ENCODE measurements at regions of chr9 and their contacts with region 1.

Region 1: DNA sequence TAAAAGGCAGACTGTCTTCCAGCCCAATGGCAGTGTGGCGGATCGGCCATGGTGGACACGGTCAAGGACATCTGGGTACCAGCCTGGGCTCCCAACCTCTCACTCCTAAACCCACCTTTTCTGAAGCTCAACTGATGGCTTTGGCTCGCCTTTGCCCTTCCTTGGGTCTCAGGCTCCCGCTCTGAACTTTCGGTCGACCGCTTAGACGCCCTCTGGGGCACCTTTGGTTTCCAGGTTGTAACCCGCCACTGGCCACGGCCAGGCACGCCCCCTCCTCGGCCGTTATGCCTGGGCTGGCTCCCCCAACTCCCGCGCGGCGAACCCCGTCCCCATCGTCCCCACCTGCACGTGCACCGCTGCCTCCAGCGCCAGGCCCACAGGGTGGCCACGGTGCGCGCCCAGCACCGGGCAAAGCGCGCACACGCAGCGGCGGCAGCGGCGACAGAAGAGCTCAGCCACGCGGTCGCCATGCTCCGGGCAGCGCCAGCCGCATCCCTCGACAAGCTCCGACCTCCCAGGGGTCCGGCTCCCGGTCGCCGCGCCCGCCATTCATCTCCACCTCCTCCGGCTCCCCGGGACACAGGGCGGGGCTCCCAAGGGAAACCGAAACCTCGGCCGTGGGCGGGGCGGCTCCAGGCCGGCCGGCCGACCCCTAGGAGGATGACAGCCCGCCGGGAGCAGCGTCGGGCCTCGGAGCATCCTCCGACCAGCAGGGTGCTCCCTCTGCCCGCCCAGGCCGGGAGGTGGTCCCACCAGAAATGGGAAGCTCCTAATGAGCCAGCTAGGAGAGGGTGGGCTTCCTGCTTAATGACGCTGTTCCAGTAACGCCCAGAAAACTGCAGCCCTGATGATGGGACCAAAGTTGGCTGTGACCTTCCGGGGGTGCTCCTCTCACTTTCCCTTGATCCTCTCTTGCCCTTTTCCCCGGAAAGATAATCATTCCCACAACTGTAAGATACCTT is at the start of gene TRIM14:
- DNase-seq: peak; percentile 35 to 71 (median 45)
- H3K4me3 ChIP-seq: peak within 1 kb of the TSS; percentile 70 to 87
- H3K4me3 Mint-ChIP-seq: peak within 1 kb of the TSS; percentile 87 to 96 (median 92)
- H3K27ac ChIP-seq: peak within 1 kb of the TSS; percentile 92
- H3K27ac Mint-ChIP-seq: peak within 1 kb of the TSS; percentile 89 to 99 (median 95)
- H3K4me1 ChIP-seq: peaks cover 70% of the 10 kb centered on the region
- H3K4me1 Mint-ChIP-seq: peaks cover 37 to 65% (median 50%) of the 10 kb centered on the region in 4 donors
- H3K27me3 ChIP-seq: no peaks in the 10 kb centered on the region
- H3K27me3 Mint-ChIP-seq: no peaks in the 10 kb centered on the region
- total RNA-seq, gene TRIM14: 86.1 to 86.2 TPM

Region 2: GRCh38 chr9:97237951-97238851 is 880.7 kb before region 1 on chr9:
- CTCF ChIA-PET with region 1: no interaction called
- POLR2A ChIA-PET with region 1: no interaction called
- intact Hi-C with region 1: no loop called
- DNase-seq: peak; percentile 69 to 81 (median 77)
- H3K4me3 ChIP-seq: peak overlapping the region; percentile 14 to 85
- H3K4me3 Mint-ChIP-seq: peak overlapping the region; percentile 92 to 98 (median 97)
- H3K27ac ChIP-seq: peak overlapping the region; percentile 57
- H3K27ac Mint-ChIP-seq: peak overlapping the region; percentile 86 to 96 (median 95)
- H3K4me1 ChIP-seq: peaks cover 11% of the 10 kb centered on the region
- H3K4me1 Mint-ChIP-seq: peaks cover 17 to 40% (median 23%) of the 10 kb centered on the region in 4 donors
- H3K27me3 ChIP-seq: no peaks in the 10 kb centered on the region
- H3K27me3 Mint-ChIP-seq: no peaks in the 10 kb centered on the region

Region 3: DNA sequence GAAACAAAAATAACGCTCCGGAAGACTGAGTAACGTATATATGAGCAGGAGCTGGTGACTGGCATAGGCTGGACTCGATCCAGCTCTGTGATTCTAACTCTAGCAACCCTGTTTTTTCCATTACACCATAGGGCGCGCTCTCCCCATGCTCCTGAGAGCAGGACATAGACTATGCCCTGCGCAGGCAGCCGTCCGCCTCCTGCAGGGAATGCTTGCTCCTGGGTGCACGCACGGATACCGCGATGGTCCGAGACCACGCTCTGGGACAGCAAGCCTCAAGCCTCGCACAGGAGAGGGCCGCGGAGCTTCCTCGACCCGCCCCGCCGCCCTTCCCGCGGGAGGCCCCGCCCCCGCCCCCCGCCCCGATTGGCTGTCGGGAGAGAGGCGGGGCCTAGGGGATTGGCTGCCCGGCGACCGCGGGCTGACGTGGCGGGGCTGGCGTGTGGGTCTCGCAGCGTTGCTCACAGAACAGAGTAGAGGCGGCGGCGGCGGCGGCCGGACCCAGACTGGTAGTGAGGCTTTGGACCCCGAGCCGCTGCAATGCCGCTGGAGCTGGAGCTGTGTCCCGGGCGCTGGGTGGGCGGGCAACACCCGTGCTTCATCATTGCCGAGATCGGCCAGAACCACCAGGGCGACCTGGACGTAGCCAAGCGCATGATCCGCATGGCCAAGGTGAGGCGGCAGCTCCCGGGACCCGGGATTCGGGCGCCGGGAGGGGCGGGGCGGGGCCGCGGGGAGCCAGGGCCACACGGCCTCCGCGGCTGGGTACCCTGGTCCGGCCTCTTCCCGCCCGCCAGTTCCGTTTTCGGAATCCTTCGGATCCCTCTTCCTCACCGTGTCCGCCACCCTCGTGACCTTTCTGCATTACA is 62.4 kb before region 1 on chr9 and contains the start of gene NANS:
- CTCF ChIA-PET with region 1: interaction called, 6 read pairs
- POLR2A ChIA-PET with region 1: interaction called, 11 read pairs
- intact Hi-C with region 1: no loop called
- DNase-seq: peak; percentile 88 to 94 (median 90)
- H3K4me3 ChIP-seq: peak within 1 kb of the TSS; percentile 56 to 76
- H3K4me3 Mint-ChIP-seq: peak within 1 kb of the TSS; percentile 96 to 100 (median 99)
- H3K27ac ChIP-seq: peak within 1 kb of the TSS; percentile 82
- H3K27ac Mint-ChIP-seq: peak within 1 kb of the TSS; percentile 90 to 99 (median 99)
- H3K4me1 ChIP-seq: peaks cover 22% of the 10 kb centered on the region
- H3K4me1 Mint-ChIP-seq: peaks cover 12 to 32% (median 22%) of the 10 kb centered on the region in 4 donors
- H3K27me3 ChIP-seq: no peaks in the 10 kb centered on the region
- H3K27me3 Mint-ChIP-seq: no peaks in the 10 kb centered on the region
- total RNA-seq, gene NANS: 22.1 to 23.2 TPM

Region 4: GRCh38 chr9:98101868-98102273 is 17.1 kb before region 1 on chr9:
- CTCF ChIA-PET with region 1: interaction called, 60 read pairs
- POLR2A ChIA-PET with region 1: interaction called, 412 read pairs
- intact Hi-C with region 1: loop called (anchors 1 kb)
- DNase-seq: peak; percentile 85 to 95 (median 94)
- H3K4me3 ChIP-seq: peak overlapping the region in 1 of 2 donors; percentile 40
- H3K4me3 Mint-ChIP-seq: peak overlapping the region; percentile 67 to 85 (median 78)
- H3K27ac ChIP-seq: peak overlapping the region; percentile 64
- H3K27ac Mint-ChIP-seq: peak overlapping the region; percentile 91 to 98 (median 94)
- H3K4me1 ChIP-seq: peaks cover 99% of the 10 kb centered on the region
- H3K4me1 Mint-ChIP-seq: peaks cover 58 to 94% (median 77%) of the 10 kb centered on the region in 4 donors
- H3K27me3 ChIP-seq: no peaks in the 10 kb centered on the region
- H3K27me3 Mint-ChIP-seq: no peaks in the 10 kb centered on the region

Region 5: DNA sequence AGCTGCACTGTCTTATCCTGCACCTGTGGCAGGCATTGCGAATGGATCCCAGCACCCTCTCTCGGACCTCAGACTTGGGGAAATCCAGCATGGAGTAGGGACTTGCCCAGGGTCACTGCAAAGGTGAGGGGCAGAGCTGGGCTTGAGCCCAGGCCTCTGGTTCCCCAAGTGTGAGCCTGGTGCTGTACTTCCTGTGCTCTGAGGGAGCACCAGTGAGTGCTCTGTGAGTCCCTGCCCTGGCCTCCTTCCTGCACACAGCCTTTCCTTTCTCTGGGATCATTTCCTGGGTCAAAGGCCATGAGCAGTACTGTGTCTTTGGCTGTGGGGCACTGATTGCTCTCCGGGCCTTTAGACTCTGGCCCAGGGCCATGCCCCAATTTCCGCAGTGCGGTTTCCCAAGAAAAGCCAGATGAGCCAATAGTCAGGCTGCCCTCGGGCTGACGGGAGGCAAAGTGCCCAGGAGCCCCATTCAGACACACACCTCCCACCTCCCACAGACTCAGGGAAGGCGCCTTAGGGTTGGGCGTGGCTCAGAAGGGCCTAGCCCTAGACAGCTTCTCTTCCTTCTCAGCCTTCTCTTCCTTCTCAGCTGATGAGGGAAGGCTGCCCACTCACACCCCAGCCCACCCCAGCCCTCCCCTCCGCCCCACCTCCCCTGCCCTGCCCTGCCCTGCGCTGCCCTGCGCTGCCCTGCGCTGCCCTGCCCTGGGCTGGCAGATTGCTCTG is 23.4 kb after region 1 on chr9:
- CTCF ChIA-PET with region 1: no interaction called
- POLR2A ChIA-PET with region 1: no interaction called
- intact Hi-C with region 1: no loop called
- DNase-seq: no peak
- H3K4me3 ChIP-seq: no peak overlapping the region
- H3K4me3 Mint-ChIP-seq: no peak overlapping the region
- H3K27ac ChIP-seq: no peak overlapping the region
- H3K27ac Mint-ChIP-seq: peak overlapping the region in 1 of 7 donors; percentile 57
- H3K4me1 ChIP-seq: no peaks in the 10 kb centered on the region
- H3K4me1 Mint-ChIP-seq: peaks cover 0 to 18% (median 4%) of the 10 kb centered on the region in 4 donors
- H3K27me3 ChIP-seq: no peaks in the 10 kb centered on the region
- H3K27me3 Mint-ChIP-seq: no peaks in the 10 kb centered on the region

Region 6: DNA sequence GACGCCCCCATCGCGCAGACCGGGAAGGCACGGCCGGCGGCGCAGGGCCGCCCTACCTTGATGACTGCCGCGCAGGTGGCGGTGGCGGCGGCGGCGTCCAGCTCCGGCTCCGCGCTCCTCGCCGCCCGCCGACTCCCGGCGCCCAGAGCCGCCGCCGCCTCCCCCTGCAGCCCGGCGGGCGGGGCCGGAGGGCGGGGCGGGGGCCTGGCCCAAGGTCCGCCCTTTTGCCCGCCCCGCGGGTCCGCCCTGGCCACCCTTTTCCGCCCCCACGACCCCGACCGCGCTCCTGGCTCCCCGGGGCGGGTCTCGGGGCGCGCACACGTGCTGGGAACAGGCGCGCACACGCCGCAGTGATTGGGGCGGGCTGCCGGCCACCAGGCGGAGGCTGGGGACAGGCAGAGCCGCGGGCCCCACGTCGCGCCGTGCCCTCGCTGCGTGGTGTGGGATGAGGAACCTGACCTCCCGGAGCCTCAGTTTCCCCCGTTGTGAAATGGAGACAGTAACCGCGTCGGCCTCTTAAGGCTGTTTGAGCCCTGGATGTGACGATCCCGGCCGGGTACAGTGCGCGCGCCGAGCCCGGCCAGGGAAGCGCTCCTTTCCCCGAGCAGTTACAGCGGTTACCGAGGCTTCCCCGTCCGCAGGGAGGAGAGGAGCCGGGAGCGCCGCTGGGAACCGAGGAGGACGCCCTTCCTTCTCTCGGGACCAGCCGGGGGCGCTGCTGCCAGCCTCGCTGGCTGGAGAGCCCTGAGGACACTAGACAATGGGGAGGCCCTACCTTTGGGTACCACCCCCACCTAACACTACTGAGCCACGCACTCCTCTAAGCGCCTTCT is 73.8 kb after region 1 on chr9 and contains the start of gene CORO2A:
- CTCF ChIA-PET with region 1: interaction called, 34 read pairs
- POLR2A ChIA-PET with region 1: interaction called, 26 read pairs
- intact Hi-C with region 1: loop called (anchors 2 kb)
- DNase-seq: peak; percentile 64 to 72 (median 70)
- H3K4me3 ChIP-seq: peak within 1 kb of the TSS; percentile 52 to 67
- H3K4me3 Mint-ChIP-seq: peak within 1 kb of the TSS; percentile 83 to 95 (median 91)
- H3K27ac ChIP-seq: peak within 1 kb of the TSS; percentile 53
- H3K27ac Mint-ChIP-seq: peak within 1 kb of the TSS; percentile 63 to 91 (median 85)
- H3K4me1 ChIP-seq: peaks cover 44% of the 10 kb centered on the region
- H3K4me1 Mint-ChIP-seq: peaks cover 16 to 50% (median 37%) of the 10 kb centered on the region in 4 donors
- H3K27me3 ChIP-seq: no peaks in the 10 kb centered on the region
- H3K27me3 Mint-ChIP-seq: no peaks in the 10 kb centered on the region
- total RNA-seq, gene CORO2A: 8.3 to 8.6 TPM

Region 7: GRCh38 chr9:98263482-98264357 is 144.8 kb after region 1 on chr9:
- CTCF ChIA-PET with region 1: interaction called, 5 read pairs
- POLR2A ChIA-PET with region 1: no interaction called
- intact Hi-C with region 1: loop called (anchors 1 kb)
- DNase-seq: peak; percentile 78 to 84 (median 80)
- H3K4me3 ChIP-seq: no peak overlapping the region
- H3K4me3 Mint-ChIP-seq: no peak overlapping the region
- H3K27ac ChIP-seq: no peak overlapping the region
- H3K27ac Mint-ChIP-seq: peak overlapping the region in 2 of 7 donors; percentile 31 to 63
- H3K4me1 ChIP-seq: no peaks in the 10 kb centered on the region
- H3K4me1 Mint-ChIP-seq: peaks cover 0 to 5% (median 3%) of the 10 kb centered on the region in 4 donors
- H3K27me3 ChIP-seq: no peaks in the 10 kb centered on the region
- H3K27me3 Mint-ChIP-seq: peaks cover 0 to 6% of the 10 kb centered on the region in 2 donors

Measured in CD4-positive, alpha-beta memory T cell (primary cell).